HepG2 (cell line): ENCODE measurements at regions of chr12 and their contacts with region 1.

Region 1: DNA sequence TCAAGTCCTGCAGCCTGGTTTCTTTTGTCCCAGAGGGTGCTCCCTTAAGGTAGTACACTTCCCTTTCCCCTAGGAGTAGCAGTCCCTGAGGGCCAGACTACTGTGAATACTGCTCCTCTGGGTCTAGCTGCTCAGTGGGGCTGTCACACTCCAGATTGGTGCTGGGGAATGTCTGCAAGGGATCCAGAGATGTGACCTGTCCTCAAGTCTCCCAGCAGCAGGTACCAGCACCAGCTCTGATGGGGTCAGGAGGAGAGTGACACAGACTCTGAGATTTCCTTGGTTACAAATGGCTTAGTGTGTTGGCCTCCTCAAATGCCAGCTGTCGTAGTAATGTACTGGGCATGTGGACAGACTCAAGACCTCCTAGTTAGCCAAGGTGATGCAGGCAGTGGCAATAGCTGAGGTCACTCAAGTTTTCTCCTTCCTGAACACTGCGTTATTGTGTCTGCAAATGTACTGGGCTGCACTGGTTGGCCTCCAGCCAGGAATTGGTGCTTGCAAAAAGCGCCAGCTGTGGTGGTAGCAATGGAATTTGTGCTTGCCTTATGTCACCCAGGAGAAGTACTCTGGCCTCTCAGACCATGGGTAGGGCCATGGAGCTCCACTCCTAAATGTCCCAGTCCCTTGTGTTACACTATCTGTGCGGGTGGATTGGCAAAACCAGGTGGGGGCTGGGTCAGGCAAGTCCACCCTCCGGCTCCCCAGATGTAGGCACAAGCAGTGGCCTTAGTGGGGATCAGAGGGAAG is 36.4 kb upstream of the AEBP2 start:
- DNase-seq: peak; percentile 78
- ATAC-seq: peak; percentile 86
- H3K4me3 ChIP-seq: no peak overlapping the region; a peak in 1 of 6 replicates
- H3K27ac ChIP-seq: no peak overlapping the region
- H3K4me1 ChIP-seq: peaks cover 29% of the 10 kb centered on the region
- H3K27me3 ChIP-seq: no peaks in the 10 kb centered on the region
- CTCF ChIP-seq: no peak
- EP300 ChIP-seq: no peak
- POLR2A ChIP-seq: no peak
- RAD21 ChIP-seq: no peak

Region 2: DNA sequence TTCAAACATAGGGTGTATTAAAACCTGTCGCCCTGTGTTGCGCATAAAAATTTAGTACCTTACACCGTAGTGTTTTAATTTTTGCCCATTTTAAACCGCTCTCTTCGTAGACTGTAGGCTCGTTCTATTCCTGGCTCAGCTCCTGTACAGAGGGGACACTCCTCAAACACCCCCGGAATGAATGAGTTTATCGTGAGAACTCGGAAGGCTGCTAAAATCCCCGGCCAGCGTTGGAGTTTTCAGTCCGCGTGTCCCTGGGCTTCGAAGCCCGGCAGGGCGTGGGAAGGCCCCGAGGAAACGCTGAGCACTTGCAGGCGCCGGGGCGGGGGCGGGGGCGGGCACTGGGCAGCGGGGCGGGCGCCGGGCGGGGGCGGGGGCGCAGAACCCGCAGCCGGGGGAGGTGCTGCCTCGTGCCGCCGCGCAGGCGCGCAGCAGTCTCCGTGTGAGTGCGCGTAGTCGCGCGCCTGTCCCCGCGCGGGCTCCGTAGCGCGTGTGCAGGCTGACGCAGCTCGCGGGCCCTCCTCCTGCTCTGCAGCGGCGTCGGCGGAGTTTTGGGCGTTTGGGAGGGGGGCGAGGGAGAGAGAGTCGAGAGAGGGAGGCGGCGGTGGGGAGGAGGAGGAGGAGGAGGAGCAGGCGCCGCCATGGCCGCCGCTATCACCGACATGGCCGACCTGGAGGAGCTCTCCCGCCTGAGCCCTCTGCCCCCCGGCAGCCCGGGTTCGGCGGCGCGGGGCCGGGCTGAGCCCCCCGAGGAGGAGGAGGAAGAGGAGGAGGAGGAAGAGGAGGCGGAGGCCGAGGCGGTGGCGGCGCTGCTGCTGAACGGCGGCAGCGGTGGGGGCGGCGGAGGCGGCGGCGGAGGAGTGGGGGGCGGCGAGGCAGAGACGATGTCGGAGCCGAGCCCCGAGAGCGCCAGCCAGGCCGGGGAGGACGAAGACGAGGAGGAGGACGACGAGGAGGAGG is 36.4 kb after region 1 on chr12 and contains the start of gene AEBP2:
- CTCF ChIA-PET with region 1: no interaction called
- POLR2A ChIA-PET with region 1: interaction called, 8 read pairs
- in situ Hi-C with region 1: no loop called
- intact Hi-C with region 1: loop called (anchors 5 kb)
- DNase-seq: peak; percentile 80
- ATAC-seq: peak; percentile 93
- H3K4me3 ChIP-seq: peak within 1 kb of the TSS; percentile 78 to 100 (median 89)
- H3K27ac ChIP-seq: peak within 1 kb of the TSS; percentile 78
- H3K4me1 ChIP-seq: peaks cover 36% of the 10 kb centered on the region
- H3K27me3 ChIP-seq: no peaks in the 10 kb centered on the region
- CTCF ChIP-seq: no peak
- EP300 ChIP-seq: no peak; a peak in 1 of 4 replicates
- POLR2A ChIP-seq: peak; percentile 44 to 77; a peak in 2 of 4 replicates
- RAD21 ChIP-seq: no peak
- total RNA-seq, gene AEBP2: 17.9 and 33.0 TPM in 2 replicates